Activated naive CD8-positive, alpha-beta T cell treated with anti-CD3 and anti-CD28 coated beads, Interleukin-2, amount 10 ng/mL, durations not matched to agents 7 days and 5 days (primary cell): ENCODE measurements at regions of chr7 and their contacts with region 1.

Region 1: DNA sequence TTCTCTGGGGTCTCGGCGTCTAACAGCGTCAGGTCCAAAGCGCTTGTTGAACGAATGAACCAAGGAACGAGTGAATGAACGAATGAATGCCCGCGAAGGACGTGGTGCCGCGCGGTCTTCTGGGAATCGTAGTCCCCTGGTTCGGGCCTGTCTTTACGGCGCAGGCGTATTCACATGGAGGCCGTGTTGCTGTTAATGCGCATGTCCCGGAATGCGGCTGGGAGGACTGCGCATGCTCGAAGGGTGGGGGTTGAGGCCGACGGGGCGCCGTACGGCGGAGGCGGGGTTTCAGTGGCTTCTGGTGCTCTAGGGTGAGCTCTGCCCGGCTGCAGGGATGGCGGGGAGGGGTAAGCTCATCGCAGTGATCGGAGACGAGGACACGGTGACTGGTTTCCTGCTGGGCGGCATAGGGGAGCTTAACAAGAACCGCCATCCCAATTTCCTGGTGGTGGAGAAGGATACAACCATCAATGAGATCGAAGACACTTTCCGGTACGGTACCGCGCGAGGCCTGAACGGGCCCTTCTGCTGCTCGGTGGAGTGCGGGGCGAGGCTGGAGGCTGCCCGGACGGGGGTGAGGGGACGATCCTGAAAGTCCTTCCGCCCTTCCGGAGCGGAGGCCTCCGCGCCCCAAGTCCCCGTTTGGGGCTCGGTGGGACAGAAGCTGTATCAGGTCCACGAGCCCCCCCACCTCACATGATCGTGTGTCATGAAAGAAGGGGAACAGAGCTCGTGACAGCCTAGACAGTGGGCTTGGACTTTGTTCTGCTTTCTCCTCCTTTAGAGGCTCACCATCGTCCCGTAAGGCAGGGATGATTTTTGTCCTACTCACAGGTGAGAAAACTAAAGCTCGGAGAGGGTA is at the start of gene ATP6V1F:
- DNase-seq: peak; percentile 99
- ATAC-seq: peak; percentile 87
- H3K4me3 Mint-ChIP-seq: peak within 1 kb of the TSS; percentile 100
- H3K27ac Mint-ChIP-seq: peak within 1 kb of the TSS; percentile 99
- H3K4me1 Mint-ChIP-seq: peaks cover 18% of the 10 kb centered on the region
- H3K27me3 Mint-ChIP-seq: peaks cover 1% of the 10 kb centered on the region
- total RNA-seq, gene ATP6V1F: 134 TPM

Region 2: DNA sequence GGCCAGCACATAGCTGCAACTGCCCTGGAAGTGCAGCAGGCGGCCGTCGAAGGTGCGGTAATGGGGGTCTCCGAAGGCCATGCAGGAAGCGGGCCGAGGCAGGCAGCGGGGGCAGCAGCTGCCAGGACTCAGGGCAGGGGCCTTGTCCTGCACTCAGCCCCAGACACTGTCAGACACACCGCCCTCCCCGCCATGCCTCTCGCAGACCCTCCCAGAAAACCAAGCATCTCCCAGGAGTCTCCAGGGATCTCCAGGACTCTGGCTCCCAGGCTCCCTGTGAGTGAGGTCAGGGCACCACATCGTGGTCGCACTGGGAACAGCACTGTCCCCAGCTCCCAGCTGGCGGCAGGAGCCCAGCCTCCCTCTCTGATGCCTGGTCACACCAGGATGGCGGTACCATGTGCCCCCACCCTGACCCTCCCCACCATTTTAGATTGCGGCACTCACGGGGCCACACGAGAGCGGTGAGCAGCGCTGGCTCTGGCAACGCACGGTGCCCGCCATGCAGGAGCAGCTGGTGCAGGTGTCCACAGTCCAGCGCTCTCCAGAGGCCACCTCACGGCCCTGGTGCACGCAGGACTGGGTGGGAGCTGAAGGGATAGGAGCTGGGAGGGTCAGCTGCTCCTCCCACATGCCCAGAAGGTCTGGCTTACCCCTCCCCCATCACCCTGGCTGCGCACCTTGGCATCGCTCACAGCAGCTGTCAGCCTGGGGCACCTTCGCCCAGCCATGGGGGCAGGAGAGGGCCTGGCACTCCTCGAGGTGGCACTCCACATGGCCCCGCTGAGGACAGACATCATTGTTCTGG is 17.3 kb after region 1 on chr7:
- POLR2A ChIA-PET with region 1: interaction called, 11 read pairs
- DNase-seq: peak; percentile 49
- ATAC-seq: peak; percentile 27
- H3K4me3 Mint-ChIP-seq: no peak overlapping the region
- H3K27ac Mint-ChIP-seq: no peak overlapping the region
- H3K4me1 Mint-ChIP-seq: peaks cover 7% of the 10 kb centered on the region
- H3K27me3 Mint-ChIP-seq: peaks cover 5% of the 10 kb centered on the region

Region 3: DNA sequence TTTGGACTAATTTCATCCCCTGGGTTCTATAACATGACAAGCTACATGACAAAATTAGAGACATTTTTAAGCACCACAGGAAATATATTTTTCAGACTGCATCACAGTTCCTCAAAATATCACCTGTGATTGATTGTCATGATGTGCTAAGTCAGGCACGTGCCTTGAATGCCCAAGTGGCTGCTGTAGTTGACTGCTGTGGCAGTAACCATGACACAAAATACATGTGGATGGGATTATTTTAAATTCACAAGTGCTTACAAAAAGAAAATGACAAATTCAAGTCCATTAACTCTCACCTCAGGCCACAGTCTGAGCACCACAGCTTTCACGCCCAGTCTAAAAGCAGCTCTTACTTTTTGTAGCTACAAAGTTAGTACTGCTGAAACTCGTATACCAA is 146.6 kb after region 1 on chr7:
- POLR2A ChIA-PET with region 1: no interaction called
- DNase-seq: no peak
- ATAC-seq: no peak
- H3K4me3 Mint-ChIP-seq: no peak overlapping the region
- H3K27ac Mint-ChIP-seq: no peak overlapping the region
- H3K4me1 Mint-ChIP-seq: peaks cover 20% of the 10 kb centered on the region
- H3K27me3 Mint-ChIP-seq: no peaks in the 10 kb centered on the region